ENCODE measurements at regions of chr22 and their contacts with region 1.

Region 1: GRCh38 chr22:44669561-44669976 is 32.4 kb upstream of the PRR5 start:
- DNase-seq: peak in 2 of 10 donors; percentile 17 to 23
- ATAC-seq: no peak
- H3K4me3 Mint-ChIP-seq: peak overlapping the region; percentile 64 to 87 (median 79)
- H3K27ac Mint-ChIP-seq: peak overlapping the region in 9 of 10 donors; percentile 34 to 86 (median 77)
- H3K4me1 Mint-ChIP-seq: peaks cover 30 to 68% (median 65%) of the 10 kb centered on the region in 4 donors
- H3K27me3 Mint-ChIP-seq: no peaks in the 10 kb centered on the region

Region 2: GRCh38 chr22:44684506-44685383 is 15.2 kb after region 1 on chr22:
- POLR2A ChIA-PET with region 1: interaction called, 14 read pairs
- DNase-seq: peak; percentile 61 to 88 (median 79)
- ATAC-seq: peak; percentile 88 to 90
- H3K4me3 Mint-ChIP-seq: peak overlapping the region; percentile 4 to 81 (median 51)
- H3K27ac Mint-ChIP-seq: peak overlapping the region in 9 of 10 donors; percentile 67 to 92 (median 82)
- H3K4me1 Mint-ChIP-seq: peaks cover 30 to 62% (median 51%) of the 10 kb centered on the region in 4 donors
- H3K27me3 Mint-ChIP-seq: no peaks in the 10 kb centered on the region

Measured in naive thymus-derived CD8-positive, alpha-beta T cell (primary cell).